ENCODE measurements at regions of chr2 and their contacts with region 1.

Region 1: GRCh38 chr2:41000374-41000773 is 548.5 kb upstream of the SLC8A1 start:
- DNase-seq: no peak
- H3K4me3 ChIP-seq: no peak overlapping the region
- H3K27ac ChIP-seq: no peak overlapping the region
- H3K4me1 ChIP-seq: no peaks in the 10 kb centered on the region
- H3K27me3 ChIP-seq: no peaks in the 10 kb centered on the region
- CTCF ChIP-seq: no peak

Region 2: DNA sequence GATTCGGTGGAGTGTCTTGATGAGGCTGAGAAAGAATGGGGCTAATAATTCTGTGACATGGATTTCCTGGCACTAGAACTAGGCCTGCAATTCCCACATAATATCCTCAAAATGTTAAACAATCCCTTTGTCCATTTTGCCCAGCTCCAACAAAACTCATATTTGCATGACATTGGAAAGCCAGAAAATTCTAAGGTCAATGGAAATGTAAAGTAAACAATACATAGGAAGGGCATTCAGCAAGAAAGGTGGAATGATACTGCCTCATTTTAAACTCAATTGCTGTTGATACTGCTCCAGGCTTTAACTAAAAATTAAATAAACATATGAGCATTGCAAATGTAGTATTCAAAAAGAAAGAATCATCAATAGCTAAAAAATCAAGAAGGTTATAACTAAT is 113.7 kb before region 1 on chr2:
- CTCF ChIA-PET with region 1: interaction called, 14 read pairs
- POLR2A ChIA-PET with region 1: no interaction called
- intact Hi-C with region 1: no loop called
- DNase-seq: no peak
- H3K4me3 ChIP-seq: no peak overlapping the region
- H3K27ac ChIP-seq: no peak overlapping the region
- H3K4me1 ChIP-seq: no peaks in the 10 kb centered on the region
- H3K27me3 ChIP-seq: no peaks in the 10 kb centered on the region
- CTCF ChIP-seq: no peak

Region 3: DNA sequence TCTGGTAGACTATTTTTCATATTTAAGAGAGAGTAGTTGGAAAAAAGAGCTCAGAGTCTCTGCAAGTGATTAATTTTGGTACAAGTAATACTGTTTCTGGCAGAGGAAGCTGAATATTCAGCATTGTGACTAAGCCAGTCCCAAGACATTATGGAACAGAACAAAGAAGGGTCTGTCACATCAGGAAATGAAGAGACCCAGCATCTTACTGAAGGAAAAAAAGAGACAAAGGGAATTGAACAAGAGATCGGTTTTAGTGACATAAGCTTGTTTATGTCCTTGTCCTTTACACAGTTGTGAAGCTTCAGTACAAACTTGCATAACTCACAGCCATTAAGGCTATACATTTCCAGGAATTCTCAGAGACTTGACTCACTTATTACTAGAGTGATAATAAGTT is 20.0 kb after region 1 on chr2:
- CTCF ChIA-PET with region 1: no interaction called
- POLR2A ChIA-PET with region 1: interaction called, 18 read pairs
- intact Hi-C with region 1: loop called (anchors 2 kb)
- DNase-seq: no peak
- H3K4me3 ChIP-seq: no peak overlapping the region
- H3K27ac ChIP-seq: no peak overlapping the region
- H3K4me1 ChIP-seq: no peaks in the 10 kb centered on the region
- H3K27me3 ChIP-seq: no peaks in the 10 kb centered on the region
- CTCF ChIP-seq: no peak

Region 4: DNA sequence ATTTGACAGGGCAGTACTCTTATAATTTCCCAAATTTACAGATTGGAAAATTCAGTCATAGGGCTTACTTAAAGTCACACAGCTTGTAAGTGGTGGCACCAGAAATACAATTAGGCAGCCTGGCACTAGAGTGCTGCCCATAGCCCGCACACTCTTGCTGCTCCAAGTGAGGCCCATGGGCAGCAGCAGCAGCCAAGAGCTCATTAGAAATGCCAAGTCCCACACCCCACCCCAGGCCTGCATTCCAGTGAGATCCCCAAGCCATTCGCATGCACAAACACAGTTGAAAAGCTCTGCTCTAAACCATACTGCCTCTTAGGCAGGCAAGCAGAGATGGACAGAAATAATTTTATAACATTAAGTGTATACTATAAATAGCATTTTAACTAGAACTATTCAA is 668.2 kb after region 1 on chr2:
- CTCF ChIA-PET with region 1: no interaction called
- POLR2A ChIA-PET with region 1: no interaction called
- intact Hi-C with region 1: no loop called
- DNase-seq: no peak
- H3K4me3 ChIP-seq: no peak overlapping the region
- H3K27ac ChIP-seq: no peak overlapping the region
- H3K4me1 ChIP-seq: no peaks in the 10 kb centered on the region
- H3K27me3 ChIP-seq: peaks cover 36% of the 10 kb centered on the region
- CTCF ChIP-seq: no peak

Measured in PC-9 (cell line).